ENCODE measurements at regions of chr4 and their contacts with region 1.

Region 1: DNA sequence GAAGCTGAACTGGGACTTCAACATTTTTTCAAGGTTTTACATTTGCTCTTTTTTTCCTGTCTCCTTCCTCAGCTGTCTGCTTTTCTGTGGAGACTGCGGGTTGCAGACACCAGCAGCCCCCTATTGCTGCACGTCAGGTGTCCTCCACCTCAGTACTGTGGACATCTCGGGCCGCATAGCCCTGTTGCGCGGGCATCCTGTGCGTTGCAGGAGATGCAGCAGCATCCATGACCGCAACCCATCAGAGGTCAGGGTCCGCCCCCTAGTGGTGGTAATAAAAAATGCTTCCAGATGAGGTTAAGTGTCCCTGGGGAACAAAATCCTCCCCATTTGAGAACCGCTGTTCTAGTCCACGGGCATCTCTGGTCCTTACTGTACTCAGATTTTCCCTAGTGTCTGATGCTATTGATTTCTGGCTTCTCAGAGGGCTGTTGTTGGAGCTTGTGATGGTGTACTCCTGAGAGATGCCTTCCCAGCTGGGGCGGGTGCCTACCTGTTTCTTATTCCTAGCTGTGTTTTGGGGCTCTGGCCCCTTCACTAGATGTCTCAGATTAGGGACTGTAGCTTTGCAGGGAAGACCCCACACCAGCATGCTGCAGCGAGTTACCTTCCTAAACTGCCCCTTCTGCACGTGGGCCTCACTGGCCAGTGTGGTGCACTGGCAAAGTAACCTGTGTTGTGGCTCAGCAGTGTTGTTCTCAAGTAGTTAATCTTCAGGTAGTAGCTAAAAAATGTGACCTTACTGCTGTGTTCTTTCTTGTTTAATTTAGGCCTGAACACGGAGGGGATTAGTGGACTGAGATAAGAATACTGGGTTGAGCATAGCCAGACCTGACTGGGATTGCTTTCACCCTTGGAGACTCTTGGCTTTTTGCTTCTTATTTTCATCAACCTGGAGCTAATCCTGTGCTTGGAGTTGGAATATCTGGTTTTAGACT is 28.2 kb downstream of the NSD2 start:
- DNase-seq: peak; percentile 91

Region 2: DNA sequence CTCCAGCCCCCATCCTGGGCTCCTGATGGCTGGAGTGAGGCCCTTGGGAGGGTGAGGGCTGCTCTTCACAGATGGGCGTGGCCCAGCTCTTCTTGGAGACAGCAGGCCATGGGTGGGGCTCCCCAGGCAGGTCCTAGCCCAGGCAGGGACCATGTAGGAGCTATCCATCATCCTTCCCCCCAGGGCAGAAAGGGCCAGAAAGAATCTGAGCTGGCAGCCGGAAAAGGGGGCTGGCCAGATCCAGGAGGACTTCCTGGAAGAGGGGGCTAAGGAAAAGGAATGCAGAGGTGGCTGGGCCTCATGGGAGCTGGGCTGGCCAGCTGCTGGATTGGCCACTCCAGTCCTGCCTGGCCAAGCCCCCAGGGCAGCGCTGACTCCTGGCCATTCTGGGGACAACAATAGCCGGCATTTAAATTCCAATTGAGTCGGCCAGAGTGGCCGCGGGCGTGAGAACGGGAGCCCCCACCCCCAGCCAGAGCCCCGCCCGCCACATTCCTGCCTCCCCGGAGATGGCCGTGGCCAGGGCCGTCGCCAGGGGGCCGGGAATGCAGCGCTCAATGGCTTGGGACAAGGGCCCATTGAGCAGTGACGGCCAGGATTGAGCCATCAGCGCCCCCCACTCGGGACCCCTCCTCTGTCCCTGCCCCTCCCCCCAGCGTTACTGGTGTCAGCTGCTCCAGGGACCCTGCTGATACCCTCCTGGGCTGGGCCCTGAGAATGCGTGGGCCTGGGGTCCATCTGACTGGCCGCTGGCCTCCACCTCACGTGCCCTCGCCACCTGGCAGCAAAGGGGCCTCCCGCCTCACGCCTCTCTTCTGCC is 121.4 kb before region 1 on chr4:
- CTCF ChIA-PET with region 1: no interaction called
- POLR2A ChIA-PET with region 1: no interaction called
- DNase-seq: no peak

Region 3: DNA sequence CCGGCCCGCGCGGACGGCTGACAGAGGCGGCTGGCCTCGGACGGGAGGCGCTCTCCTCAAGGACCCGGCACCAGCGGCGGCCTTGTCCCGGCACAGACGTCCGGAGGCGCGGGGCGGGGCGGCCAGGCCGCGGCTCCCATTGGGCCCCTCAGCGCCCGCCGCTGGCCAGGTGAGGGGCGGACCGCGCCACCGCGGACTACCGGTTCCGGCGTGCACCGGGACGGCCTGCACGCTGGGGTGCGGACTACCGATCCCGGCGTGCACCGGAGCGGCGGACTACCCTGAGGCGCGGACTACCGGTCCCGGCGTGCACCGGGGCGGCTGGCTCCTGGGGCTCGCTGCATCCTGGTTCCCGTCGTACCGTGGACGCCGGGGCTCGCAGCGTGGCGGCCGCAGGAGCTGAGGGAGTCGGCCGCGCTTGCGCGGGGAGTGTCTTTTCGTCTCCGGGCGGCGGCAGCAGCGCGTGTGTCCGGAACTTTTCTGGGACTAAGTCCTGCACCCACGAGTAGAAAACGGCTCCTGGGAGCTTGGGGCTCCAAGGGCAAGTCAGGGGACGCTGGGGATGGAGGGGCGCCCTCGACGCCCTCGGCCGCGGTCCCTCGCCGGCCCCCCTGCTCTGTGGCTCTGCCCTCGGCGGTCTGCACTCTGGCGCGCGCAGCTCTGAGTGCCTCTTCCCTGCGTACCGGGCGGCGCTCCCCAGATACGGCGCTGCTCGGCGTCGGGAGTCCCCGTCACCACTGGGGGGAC is 43.2 kb before region 1 on chr4 and contains the start of gene LETM1:
- CTCF ChIA-PET with region 1: interaction called, 3 read pairs
- POLR2A ChIA-PET with region 1: interaction called, 11 read pairs
- DNase-seq: peak; percentile 92

Region 4: GRCh38 chr4:1910643-1911042 is 11.2 kb after region 1 on chr4:
- CTCF ChIA-PET with region 1: interaction called, 35 read pairs
- POLR2A ChIA-PET with region 1: no interaction called
- DNase-seq: peak; percentile 70